ENCODE measurements at regions of chr7 and their contacts with region 1.

Region 1: GRCh38 chr7:974820-975681 is at the start of gene COX19:
- DNase-seq: peak; percentile 90 to 94
- H3K4me3 ChIP-seq: peak within 1 kb of the TSS; percentile 99
- H3K4me3 Mint-ChIP-seq: peak within 1 kb of the TSS; percentile 88
- H3K27ac Mint-ChIP-seq: peak within 1 kb of the TSS; percentile 88
- H3K4me1 ChIP-seq: peaks cover 57% of the 10 kb centered on the region
- H3K4me1 Mint-ChIP-seq: peaks cover 11% of the 10 kb centered on the region
- H3K27me3 ChIP-seq: no peaks in the 10 kb centered on the region
- H3K27me3 Mint-ChIP-seq: no peaks in the 10 kb centered on the region
- CTCF ChIP-seq: no peak
- total RNA-seq, gene COX19: 24.8 and 25.6 TPM in 2 replicates

Region 2: DNA sequence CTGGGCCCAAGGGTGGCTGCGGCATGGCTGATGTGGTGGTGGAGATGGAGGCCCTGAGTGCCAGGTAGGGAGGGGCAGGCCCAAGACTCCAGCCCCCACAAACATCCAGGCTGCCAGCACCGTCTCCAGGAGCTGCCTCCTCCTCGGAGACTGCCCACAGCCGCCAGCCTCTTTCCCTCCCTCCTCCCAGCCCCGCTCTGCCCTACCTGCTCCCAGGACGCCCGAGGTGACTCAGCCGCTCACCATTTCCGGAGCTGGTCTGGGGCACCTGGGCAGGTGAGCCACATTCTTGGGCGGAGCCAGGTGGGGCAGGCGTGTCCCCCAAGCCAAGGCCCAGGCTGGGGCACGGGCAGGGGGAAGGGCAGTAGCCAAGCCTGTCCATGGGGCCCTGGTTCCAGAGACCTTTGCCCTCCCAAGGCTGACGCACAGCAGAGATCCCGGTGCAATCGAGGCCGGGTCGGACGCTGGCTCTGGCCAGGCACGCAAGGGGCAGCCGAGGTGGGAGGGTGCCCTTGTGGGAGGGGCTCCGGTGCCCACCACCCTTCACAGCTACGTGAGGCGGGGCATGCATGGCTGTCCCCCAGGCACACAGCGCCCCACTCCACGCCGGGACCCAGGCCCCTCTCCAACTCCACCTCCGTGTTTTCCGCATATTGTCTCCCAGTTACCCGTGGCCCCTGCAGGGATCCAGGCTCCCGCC is 29.3 kb before region 1 on chr7:
- CTCF ChIA-PET with region 1: interaction called, 3 read pairs
- POLR2A ChIA-PET with region 1: interaction called, 12 read pairs
- intact Hi-C with region 1: loop called (anchors 1 kb)
- DNase-seq: peak; percentile 99
- H3K4me3 ChIP-seq: peak overlapping the region; percentile 44
- H3K4me3 Mint-ChIP-seq: peak overlapping the region; percentile 54
- H3K27ac Mint-ChIP-seq: peak overlapping the region; percentile 82
- H3K4me1 ChIP-seq: peaks cover 33% of the 10 kb centered on the region
- H3K4me1 Mint-ChIP-seq: no peaks in the 10 kb centered on the region
- H3K27me3 ChIP-seq: no peaks in the 10 kb centered on the region
- H3K27me3 Mint-ChIP-seq: no peaks in the 10 kb centered on the region
- CTCF ChIP-seq: no peak

Region 3: DNA sequence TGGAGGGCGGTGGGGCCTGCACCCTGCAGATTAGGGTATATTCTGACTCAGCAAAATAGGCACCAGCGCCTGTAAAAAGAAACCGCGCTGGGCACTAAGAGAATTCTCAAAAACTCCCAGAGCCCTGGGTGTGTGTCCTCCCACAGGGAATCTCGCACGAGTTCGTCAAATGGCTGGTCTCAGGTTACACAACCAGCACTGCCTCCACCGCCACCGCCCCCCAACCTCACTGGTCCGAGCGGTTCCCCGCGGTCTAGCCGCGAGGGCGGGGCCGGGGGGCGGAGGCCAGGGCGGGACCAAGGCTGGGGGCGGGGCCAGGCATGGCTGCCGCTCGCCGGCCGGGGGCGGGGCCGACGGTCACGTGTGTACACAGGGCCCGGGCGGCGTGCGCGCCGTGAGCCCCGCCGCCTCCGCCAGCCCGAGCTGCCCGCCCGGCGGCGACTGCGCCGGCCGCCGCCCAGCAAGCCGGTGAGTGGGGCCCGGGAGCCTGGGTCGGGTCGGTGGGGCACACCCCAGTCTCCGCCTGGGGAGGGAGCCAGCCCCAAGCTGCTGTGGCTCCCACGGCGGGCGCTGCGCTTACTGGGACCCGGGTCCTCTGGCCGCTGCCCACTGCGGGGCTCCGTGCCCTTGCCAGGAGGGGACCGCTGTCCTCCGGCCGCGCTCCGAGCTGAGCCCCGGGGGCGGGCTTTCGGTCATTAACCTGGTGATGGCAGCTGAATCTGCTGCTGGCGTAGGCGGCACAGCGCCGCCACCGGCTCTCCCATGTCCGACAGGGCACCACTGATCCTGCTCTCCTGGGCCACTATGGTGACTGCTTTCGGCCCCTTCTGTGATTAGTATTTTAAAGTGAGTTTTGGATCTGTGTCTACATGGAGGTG is 69.4 kb after region 1 on chr7 and contains the start of gene GPR146:
- CTCF ChIA-PET with region 1: no interaction called
- POLR2A ChIA-PET with region 1: no interaction called
- intact Hi-C with region 1: loop called (anchors 5 kb)
- DNase-seq: peak; percentile 97 to 98
- H3K4me3 ChIP-seq: peak within 1 kb of the TSS; percentile 81
- H3K4me3 Mint-ChIP-seq: peak within 1 kb of the TSS; percentile 71
- H3K27ac Mint-ChIP-seq: peak within 1 kb of the TSS; percentile 79
- H3K4me1 ChIP-seq: peaks cover 29% of the 10 kb centered on the region
- H3K4me1 Mint-ChIP-seq: peaks cover 18% of the 10 kb centered on the region
- H3K27me3 ChIP-seq: no peaks in the 10 kb centered on the region
- H3K27me3 Mint-ChIP-seq: no peaks in the 10 kb centered on the region
- CTCF ChIP-seq: peak; percentile 24 to 52
- total RNA-seq, gene GPR146: 1.8 and 3.0 TPM in 2 replicates

Region 4: GRCh38 chr7:1137510-1138167 is 162.6 kb after region 1 on chr7:
- CTCF ChIA-PET with region 1: interaction called, 3 read pairs
- POLR2A ChIA-PET with region 1: interaction called, 12 read pairs
- intact Hi-C with region 1: loop called (anchors 5 kb)
- DNase-seq: peak in 1 of 2 experiments; percentile 26
- H3K4me3 ChIP-seq: peak overlapping the region; percentile 98
- H3K4me3 Mint-ChIP-seq: peak overlapping the region; percentile 72
- H3K27ac Mint-ChIP-seq: peak overlapping the region; percentile 96
- H3K4me1 ChIP-seq: peaks cover 4% of the 10 kb centered on the region; the same call in 1 of the 2 replicates
- H3K4me1 Mint-ChIP-seq: peaks cover 11% of the 10 kb centered on the region
- H3K27me3 ChIP-seq: no peaks in the 10 kb centered on the region
- H3K27me3 Mint-ChIP-seq: no peaks in the 10 kb centered on the region
- CTCF ChIP-seq: no peak

Region 5: DNA sequence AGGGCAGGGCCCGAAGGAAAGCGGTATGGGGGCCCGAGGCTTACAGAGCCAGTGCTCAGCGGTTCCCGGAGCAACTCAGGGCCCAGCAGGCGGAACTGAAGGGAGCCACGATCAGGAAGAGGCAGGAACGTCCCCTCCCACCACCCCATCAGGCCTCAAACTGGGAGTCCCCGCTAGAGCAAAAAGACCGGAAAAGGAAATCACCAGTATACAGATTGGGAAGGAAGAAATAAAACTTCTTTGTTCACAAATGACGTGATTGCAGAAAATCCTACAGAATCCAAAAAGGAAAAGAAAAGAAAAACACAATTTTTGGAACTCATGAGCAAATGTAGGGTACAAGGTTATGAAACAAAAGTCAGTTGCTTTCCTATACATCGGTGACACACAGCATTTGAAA is 206.6 kb after region 1 on chr7:
- CTCF ChIA-PET with region 1: no interaction called
- POLR2A ChIA-PET with region 1: no interaction called
- intact Hi-C with region 1: loop called (anchors 5 kb)
- DNase-seq: no peak
- H3K4me3 ChIP-seq: no peak overlapping the region
- H3K4me3 Mint-ChIP-seq: no peak overlapping the region
- H3K27ac Mint-ChIP-seq: no peak overlapping the region
- H3K4me1 ChIP-seq: peaks cover 2% of the 10 kb centered on the region; the same call in 1 of the 2 replicates
- H3K4me1 Mint-ChIP-seq: no peaks in the 10 kb centered on the region
- H3K27me3 ChIP-seq: no peaks in the 10 kb centered on the region
- H3K27me3 Mint-ChIP-seq: peaks cover 9% of the 10 kb centered on the region
- CTCF ChIP-seq: no peak

Measured in Caco-2 (cell line).